ENCODE measurements at regions of chr11 and their contacts with region 1.

Region 1: GRCh38 chr11:96254087-96254486 is 88.9 kb downstream of the MAML2 start:
- DNase-seq: peak in 21 of 35 experiments; percentile 7 to 59 (median 27)
- ATAC-seq: peak; percentile 26 to 45 (median 38)
- H3K4me3 ChIP-seq: peak overlapping the region; percentile 12 to 29
- H3K4me3 Mint-ChIP-seq: peak overlapping the region; percentile 59 to 73 (median 70)
- H3K27ac ChIP-seq: peak overlapping the region; percentile 40
- H3K27ac Mint-ChIP-seq: peak overlapping the region; percentile 92 to 100
- H3K4me1 ChIP-seq: peaks cover 40 to 70% of the 10 kb centered on the region in 2 experiments
- H3K4me1 Mint-ChIP-seq: peaks cover 92 to 93% (median 92%) of the 10 kb centered on the region in 3 donors
- H3K27me3 ChIP-seq: no peaks in the 10 kb centered on the region
- H3K27me3 Mint-ChIP-seq: no peaks in the 10 kb centered on the region

Region 2: GRCh38 chr11:96237766-96238266 is 16.3 kb before region 1 on chr11:
- CTCF ChIA-PET with region 1: interaction called in 1 of 2 experiments, 6 read pairs
- POLR2A ChIA-PET with region 1: interaction called, 6 to 11 read pairs
- DNase-seq: no peak
- ATAC-seq: no peak
- H3K4me3 ChIP-seq: no peak overlapping the region
- H3K4me3 Mint-ChIP-seq: no peak overlapping the region
- H3K27ac ChIP-seq: no peak overlapping the region
- H3K27ac Mint-ChIP-seq: no peak overlapping the region
- H3K4me1 ChIP-seq: peaks cover 12 to 22% of the 10 kb centered on the region in 2 experiments
- H3K4me1 Mint-ChIP-seq: peaks cover 31 to 47% (median 31%) of the 10 kb centered on the region in 3 donors
- H3K27me3 ChIP-seq: no peaks in the 10 kb centered on the region
- H3K27me3 Mint-ChIP-seq: no peaks in the 10 kb centered on the region

Region 3: DNA sequence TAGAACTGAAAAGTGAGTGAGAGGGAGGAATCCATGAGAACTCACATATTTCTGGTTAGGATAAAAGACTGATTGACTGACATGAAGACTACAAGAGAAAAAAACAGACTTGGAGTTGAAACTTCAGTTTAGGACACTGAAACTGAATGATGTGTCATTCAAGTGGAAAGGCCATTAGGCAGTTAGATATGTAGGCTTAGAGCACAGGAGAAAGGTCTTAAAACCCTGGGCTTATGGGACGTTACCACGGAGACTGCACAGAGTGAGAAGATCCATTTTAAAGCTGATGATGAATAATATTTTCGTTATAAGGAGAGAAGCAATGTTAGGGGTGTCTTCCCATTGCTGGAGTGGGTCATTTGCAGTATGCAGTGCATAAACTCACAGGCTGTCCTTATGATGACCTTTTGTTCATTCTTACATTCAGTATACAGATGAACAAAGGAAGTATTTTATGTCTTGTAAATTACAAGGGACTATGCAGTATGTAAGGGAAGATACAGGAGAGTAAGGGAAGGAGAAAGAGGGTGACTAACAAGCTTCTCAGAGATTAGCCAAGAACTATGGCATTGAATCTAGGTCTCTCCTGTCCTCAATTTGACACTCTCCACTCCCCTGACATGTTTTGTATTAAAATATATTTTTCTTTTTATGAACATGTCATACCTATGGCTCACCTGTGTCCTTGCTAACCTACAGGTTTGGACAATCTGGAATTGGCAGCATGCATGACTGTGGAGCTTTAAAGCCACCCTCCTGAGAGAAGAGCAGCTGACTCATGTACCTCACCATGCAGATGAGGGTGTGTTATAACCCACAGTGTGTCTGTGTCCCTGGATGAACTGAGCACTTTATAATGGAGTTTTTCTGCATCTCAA is 25.2 kb after region 1 on chr11:
- CTCF ChIA-PET with region 1: interaction called in 1 of 2 experiments, 3 read pairs
- POLR2A ChIA-PET with region 1: interaction called in 1 of 2 experiments, 15 read pairs
- DNase-seq: no peak
- ATAC-seq: peak; percentile 38 to 82 (median 73)
- H3K4me3 ChIP-seq: no peak overlapping the region
- H3K4me3 Mint-ChIP-seq: peak overlapping the region in 1 of 3 donors; percentile 40
- H3K27ac ChIP-seq: no peak overlapping the region
- H3K27ac Mint-ChIP-seq: peak overlapping the region; percentile 62 to 66
- H3K4me1 ChIP-seq: peaks cover 6 to 31% of the 10 kb centered on the region in 2 experiments
- H3K4me1 Mint-ChIP-seq: peaks cover 70 to 76% (median 71%) of the 10 kb centered on the region in 3 donors
- H3K27me3 ChIP-seq: no peaks in the 10 kb centered on the region
- H3K27me3 Mint-ChIP-seq: no peaks in the 10 kb centered on the region